ENCODE measurements at regions of chr20 and their contacts with region 1.

Region 1: DNA sequence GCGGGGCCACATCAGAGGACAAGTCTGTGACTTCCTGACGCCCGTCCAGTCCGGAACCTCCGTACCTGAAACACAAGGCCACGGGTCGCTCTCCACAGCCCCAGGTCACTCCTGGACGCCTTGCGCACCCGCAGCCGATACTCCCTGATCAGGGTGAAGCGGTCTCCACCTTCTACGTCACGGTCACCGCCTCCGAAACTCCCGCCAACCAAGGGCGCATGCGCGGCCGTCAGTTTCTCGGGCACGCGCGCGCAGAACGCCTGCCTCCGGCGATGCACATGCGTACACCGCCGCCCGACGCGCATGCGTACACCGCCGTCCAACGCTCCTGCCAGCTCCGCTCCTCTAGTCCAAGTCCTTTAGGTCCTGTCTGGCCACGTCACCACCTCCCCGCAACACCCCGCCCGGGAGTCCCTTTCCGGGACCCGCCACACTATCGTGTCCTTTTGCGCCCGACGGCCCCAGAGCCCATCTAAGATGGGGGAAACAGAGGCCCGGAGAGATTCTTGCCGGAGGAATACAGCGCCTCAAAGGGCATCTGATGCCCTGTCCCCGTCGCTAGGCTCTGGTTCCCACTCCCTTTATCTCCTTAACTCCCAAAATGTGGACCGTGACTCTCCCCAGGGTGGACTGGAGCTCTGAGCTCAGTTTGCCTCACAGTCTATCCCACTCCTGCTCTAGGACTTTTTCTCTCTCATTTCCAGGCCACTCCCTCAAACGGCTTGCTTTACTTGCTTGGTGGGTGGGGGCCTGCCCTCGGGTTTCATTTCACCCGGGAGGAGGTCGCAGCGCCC is at the start of gene DSN1:
- DNase-seq: peak; percentile 99
- ATAC-seq: peak; percentile 80 to 89 (median 85)
- H3K4me3 ChIP-seq: peak within 1 kb of the TSS; percentile 86
- H3K4me3 Mint-ChIP-seq: peak within 1 kb of the TSS; percentile 94
- H3K27ac ChIP-seq: peak within 1 kb of the TSS; percentile 96
- H3K27ac Mint-ChIP-seq: peak within 1 kb of the TSS; percentile 93 to 94
- H3K4me1 ChIP-seq: peaks cover 13% of the 10 kb centered on the region
- H3K4me1 Mint-ChIP-seq: peaks cover 17 to 27% of the 10 kb centered on the region in 2 donors
- H3K27me3 ChIP-seq: no peaks in the 10 kb centered on the region
- H3K27me3 Mint-ChIP-seq: no peaks in the 10 kb centered on the region
- CTCF ChIP-seq: no peak
- total RNA-seq, gene DSN1: 15.8 to 19.1 (median 15.8) TPM

Region 2: DNA sequence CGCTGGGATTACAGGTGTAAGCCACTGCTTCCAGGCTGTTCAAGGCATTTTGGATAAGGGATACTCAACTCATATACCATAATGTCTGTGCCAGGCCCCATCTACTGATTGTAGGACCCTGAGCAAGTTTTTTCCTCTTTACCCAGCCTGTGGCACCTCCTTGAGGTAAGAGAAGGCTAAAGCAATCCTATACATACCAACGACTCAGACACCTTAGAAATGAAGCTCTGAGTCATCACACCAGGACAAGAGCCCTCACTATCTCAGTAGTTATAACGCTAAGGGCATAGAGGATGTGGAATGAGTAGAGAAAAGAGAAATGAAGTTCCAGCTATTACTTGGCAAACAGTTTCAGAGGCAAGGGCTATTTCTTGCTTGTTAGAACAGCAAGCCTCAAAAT is 44.8 kb before region 1 on chr20:
- intact Hi-C with region 1: no loop called
- DNase-seq: peak in 1 of 2 donors; percentile 14
- ATAC-seq: peak in 1 of 3 donors; percentile 54
- H3K4me3 ChIP-seq: no peak overlapping the region
- H3K4me3 Mint-ChIP-seq: no peak overlapping the region
- H3K27ac ChIP-seq: no peak overlapping the region
- H3K27ac Mint-ChIP-seq: no peak overlapping the region
- H3K4me1 ChIP-seq: peaks cover 15% of the 10 kb centered on the region
- H3K4me1 Mint-ChIP-seq: peaks cover 8% of the 10 kb centered on the region in 2 donors
- H3K27me3 ChIP-seq: no peaks in the 10 kb centered on the region
- H3K27me3 Mint-ChIP-seq: no peaks in the 10 kb centered on the region
- CTCF ChIP-seq: no peak

Region 3: GRCh38 chr20:36745927-36746659 is 27.7 kb before region 1 on chr20 and contains the start of gene NDRG3:
- intact Hi-C with region 1: loop called (anchors 1 kb)
- DNase-seq: peak; percentile 83 to 97
- ATAC-seq: peak; percentile 98 to 100 (median 99)
- H3K4me3 ChIP-seq: peak within 1 kb of the TSS; percentile 86
- H3K4me3 Mint-ChIP-seq: peak within 1 kb of the TSS; percentile 95
- H3K27ac ChIP-seq: peak within 1 kb of the TSS; percentile 64
- H3K27ac Mint-ChIP-seq: peak within 1 kb of the TSS; percentile 78 to 86
- H3K4me1 ChIP-seq: peaks cover 17% of the 10 kb centered on the region
- H3K4me1 Mint-ChIP-seq: peaks cover 28 to 35% of the 10 kb centered on the region in 2 donors
- H3K27me3 ChIP-seq: no peaks in the 10 kb centered on the region
- H3K27me3 Mint-ChIP-seq: no peaks in the 10 kb centered on the region
- CTCF ChIP-seq: peak; percentile 15
- total RNA-seq, gene NDRG3: 27.1 to 30.3 (median 28.3) TPM